Activated CD4-positive, alpha-beta T cell treated with anti-CD3 and anti-CD28 coated beads, Interleukin-2, amount 10 ng/mL, durations not matched to agents 24 days and 14 days (primary cell): ENCODE measurements at regions of chr15 and their contacts with region 1.

Region 1: DNA sequence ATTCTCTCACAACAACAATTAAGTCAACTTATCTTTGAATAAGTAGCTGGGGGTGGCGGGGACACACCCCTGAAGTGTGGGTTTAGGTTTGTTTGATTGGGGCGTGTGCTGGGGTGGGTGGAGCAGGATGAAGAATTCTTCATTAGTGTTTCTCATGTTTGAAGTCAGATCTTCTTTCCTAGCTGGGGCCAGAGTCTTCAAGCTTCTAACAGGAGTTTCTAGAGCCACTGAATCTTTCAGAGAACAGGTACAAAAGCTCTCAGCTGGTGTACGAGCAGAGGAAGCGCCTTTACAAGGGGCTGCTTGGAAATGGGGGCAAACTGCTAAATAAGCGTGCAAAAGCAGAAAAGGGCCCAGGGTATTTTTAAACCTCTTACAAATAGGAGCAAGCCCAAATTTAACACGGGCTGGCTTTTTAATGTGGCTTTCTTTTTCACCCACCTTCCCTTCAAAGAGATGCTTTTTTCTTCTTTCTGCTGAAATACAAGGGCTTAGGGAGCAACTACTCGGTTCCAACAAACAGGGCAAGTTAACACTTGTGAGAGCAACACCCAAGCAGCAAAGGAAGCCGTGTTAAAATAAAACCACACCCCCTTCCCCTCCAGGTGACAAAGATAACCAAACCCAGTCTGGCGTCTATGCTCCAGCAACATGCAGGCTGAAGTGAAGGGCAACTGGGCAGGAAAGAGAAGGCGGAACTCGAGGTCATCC is 86.9 kb upstream of the RASGRP1 start:
- DNase-seq: peak; percentile 89
- H3K4me3 Mint-ChIP-seq: peak overlapping the region; percentile 82
- H3K27ac Mint-ChIP-seq: peak overlapping the region; percentile 90
- H3K4me1 Mint-ChIP-seq: peaks cover 76% of the 10 kb centered on the region
- H3K27me3 Mint-ChIP-seq: no peaks in the 10 kb centered on the region

Region 2: DNA sequence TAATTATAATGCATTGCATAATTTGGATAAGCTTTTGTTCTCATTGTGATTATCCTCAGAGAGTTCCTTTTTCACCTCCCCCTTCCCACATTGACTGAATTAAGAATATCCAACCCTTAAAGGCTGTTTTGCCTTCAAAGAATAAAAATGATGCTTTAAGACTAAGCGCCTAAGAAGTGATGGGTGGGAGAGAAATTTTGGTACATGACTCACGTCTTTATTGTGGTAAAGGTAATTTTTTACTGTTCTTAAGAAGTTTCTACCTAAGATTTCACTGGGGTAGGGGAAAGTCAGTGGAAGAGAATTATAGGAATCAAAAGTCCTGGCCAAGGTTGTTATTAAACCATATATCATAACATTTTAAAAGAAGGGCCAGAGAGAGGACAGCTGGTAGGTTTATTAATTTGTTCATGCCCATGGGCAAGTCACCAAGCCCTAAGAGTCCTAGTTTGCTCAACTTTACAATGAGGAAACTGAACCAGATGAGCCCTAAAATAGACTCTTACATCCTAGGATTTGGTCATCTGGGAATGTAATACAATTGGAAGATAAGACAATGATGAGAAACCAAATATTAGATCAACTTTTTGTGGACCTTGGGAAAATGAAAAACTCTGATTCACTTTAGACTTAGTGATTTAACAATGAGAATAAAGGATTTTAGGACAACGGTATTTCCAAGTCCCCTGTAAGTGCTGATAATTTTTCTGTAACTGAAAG is 14.3 kb after region 1 on chr15:
- intact Hi-C with region 1: loop called (anchors 1 kb)
- DNase-seq: no peak
- H3K4me3 Mint-ChIP-seq: peak overlapping the region; percentile 53
- H3K27ac Mint-ChIP-seq: peak overlapping the region; percentile 81
- H3K4me1 Mint-ChIP-seq: peaks cover 75% of the 10 kb centered on the region
- H3K27me3 Mint-ChIP-seq: no peaks in the 10 kb centered on the region

Region 3: DNA sequence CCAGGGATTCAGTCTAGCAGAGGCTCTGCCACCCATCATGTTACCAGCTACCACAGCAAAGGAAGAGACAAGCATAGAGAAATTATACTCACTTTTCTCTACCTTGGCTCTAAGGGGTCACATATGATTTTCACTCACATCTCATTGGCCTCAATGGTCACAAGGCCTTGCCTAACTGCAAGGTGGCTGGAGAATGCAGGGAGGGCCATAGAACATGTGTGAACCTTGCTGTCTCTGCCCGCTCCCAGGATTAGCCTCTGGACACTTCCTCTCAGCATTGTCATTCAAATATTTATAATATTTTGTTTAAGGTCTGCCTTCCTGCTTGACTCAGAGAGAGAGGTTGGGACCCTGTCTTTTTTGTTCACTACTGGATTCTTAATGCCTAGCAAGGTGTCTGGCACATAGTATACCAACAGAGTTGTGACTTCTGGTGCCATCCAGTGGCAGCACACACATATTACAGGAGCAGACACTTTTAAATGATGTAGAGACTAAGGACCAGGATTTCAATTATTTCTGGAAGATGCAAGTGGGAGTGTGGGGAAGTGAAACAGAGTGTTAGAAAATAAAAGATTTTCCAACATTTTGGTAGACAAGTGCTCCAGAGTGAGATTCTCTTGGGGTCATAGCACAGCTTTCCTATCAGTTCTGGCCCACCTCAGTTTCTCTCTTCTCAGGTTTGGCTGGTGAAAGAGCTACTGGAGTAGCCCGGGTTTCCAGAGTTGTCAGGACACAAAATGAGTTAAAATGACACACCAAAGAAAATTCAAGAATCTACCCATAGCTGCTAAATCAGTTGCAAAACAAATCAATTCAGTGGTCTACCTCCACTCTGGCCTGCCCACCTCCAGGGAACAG is 32.1 kb after region 1 on chr15:
- intact Hi-C with region 1: loop called (anchors 1 kb)
- DNase-seq: peak; percentile 91
- H3K4me3 Mint-ChIP-seq: peak overlapping the region; percentile 55
- H3K27ac Mint-ChIP-seq: peak overlapping the region; percentile 97
- H3K4me1 Mint-ChIP-seq: peaks cover 73% of the 10 kb centered on the region
- H3K27me3 Mint-ChIP-seq: no peaks in the 10 kb centered on the region